Mucosa of descending colon (tissue), 3 donors: ENCODE measurements at regions of chr17 and their contacts with region 1.

Region 1: GRCh38 chr17:7004398-7005253 is 7.8 kb upstream of the RNASEK start:
- DNase-seq: peak in 2 of 3 donors; percentile 31 to 65
- ATAC-seq: peak; percentile 85
- H3K4me3 ChIP-seq: no peak overlapping the region
- H3K4me1 ChIP-seq: no peaks in the 10 kb centered on the region
- CTCF ChIP-seq: peak; percentile 38

Region 2: GRCh38 chr17:6913608-6914443 is 90.8 kb before region 1 on chr17:
- intact Hi-C with region 1: loop called (anchors 5 kb)
- DNase-seq: peak in 2 of 3 donors; percentile 78 to 84
- ATAC-seq: peak; percentile 74
- H3K4me3 ChIP-seq: no peak overlapping the region
- H3K4me1 ChIP-seq: no peaks in the 10 kb centered on the region
- CTCF ChIP-seq: peak; percentile 68